ENCODE measurements at regions of chr11 and their contacts with region 1.

Region 1: GRCh38 chr11:33310720-33311500 is 53.7 kb downstream of the HIPK3 start:
- DNase-seq: no peak
- H3K4me3 ChIP-seq: no peak overlapping the region
- H3K27ac ChIP-seq: no peak overlapping the region
- H3K4me1 ChIP-seq: peaks cover 8% of the 10 kb centered on the region
- H3K27me3 ChIP-seq: no peaks in the 10 kb centered on the region
- CTCF ChIP-seq: no peak
- EP300 ChIP-seq: no peak
- POLR2A ChIP-seq: no peak

Region 2: DNA sequence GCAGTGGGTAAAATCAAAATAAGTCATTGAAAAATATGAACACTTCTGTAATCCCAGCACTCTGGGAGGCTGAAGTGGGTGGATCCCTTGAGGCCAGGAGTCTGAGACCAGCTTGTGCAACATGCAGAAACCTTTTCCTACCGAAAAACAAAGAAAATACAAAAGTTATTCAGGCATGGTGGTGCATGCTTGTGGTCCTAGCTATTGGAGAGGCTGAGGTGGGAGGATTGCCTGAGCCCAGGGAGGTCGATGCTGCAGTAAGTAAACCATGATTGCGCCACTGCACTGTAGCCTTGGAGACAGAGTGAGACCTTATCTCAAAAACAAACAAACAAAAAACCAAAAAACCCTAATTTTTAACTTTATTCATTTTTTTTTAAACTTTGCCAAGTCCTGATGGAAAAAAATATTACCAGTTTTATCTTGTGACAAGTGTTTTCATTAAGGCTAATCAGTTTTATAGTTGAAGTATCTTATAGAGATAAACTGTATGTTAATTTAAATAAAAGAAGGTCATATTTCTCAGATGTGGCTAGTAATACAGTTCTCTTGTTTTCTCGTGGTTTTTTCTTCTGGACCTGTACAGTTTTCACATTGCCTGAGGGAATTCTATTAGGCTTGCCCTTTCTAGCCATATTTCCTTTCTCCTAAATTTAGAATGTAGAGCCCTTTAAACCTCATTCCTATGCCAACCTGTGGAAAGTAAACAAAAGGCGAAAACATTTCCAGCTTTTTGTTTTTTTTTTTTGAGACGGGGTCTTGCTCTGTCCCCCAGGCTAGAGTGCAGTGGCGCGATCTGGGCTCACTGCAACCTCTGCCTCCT is 44.3 kb before region 1 on chr11:
- intact Hi-C with region 1: loop called in 1 of 4 experiments (anchors 10 kb)
- DNase-seq: peak; percentile 39 to 78 (median 49)
- H3K4me3 ChIP-seq: no peak overlapping the region
- H3K27ac ChIP-seq: no peak overlapping the region
- H3K4me1 ChIP-seq: peaks cover 17% of the 10 kb centered on the region
- H3K27me3 ChIP-seq: no peaks in the 10 kb centered on the region
- CTCF ChIP-seq: no peak
- EP300 ChIP-seq: no peak
- POLR2A ChIP-seq: no peak

Region 3: GRCh38 chr11:33344611-33345010 is 33.7 kb after region 1 on chr11:
- intact Hi-C with region 1: no loop called
- DNase-seq: no peak
- H3K4me3 ChIP-seq: no peak overlapping the region
- H3K27ac ChIP-seq: no peak overlapping the region
- H3K4me1 ChIP-seq: no peaks in the 10 kb centered on the region
- H3K27me3 ChIP-seq: no peaks in the 10 kb centered on the region
- CTCF ChIP-seq: no peak
- EP300 ChIP-seq: no peak
- POLR2A ChIP-seq: no peak